Left ventricle myocardium superior (tissue), 1 donor: ENCODE measurements at regions of chr3 and their contacts with region 1.

Region 1: DNA sequence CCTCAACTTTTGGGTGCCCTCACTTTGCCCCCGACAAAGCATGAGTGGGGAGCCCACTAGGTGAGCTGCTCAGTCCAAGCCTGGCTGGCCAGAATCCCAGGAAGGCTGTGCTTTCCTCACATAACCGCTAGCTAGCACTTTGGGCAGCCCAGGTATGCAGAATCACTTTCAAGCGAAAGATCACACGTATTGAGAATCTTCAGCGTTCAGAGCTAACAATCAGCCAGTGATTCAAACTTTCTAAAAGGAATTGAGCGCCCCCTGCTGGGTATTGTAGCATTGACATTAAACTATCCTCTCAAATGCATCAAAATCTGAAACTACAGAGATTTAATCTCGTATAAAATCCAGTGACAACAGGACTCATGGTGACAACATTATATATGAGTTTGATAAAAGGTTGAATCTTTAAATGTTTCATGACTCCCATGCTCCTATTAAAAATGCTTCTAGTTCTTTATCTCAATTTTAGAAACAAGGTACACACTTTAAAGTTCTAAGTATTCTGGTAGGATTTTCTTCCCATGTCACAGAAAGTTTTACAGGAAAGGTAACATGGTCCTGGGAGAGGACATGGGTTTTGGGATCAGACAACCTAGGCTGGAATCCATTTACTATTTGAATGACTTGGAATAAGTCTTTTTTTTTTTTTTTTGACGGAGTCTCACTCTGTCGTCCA is 11.8 kb downstream of the ANAPC13 start:
- DNase-seq: peak; percentile 52
- ATAC-seq: peak; percentile 47

Region 2: DNA sequence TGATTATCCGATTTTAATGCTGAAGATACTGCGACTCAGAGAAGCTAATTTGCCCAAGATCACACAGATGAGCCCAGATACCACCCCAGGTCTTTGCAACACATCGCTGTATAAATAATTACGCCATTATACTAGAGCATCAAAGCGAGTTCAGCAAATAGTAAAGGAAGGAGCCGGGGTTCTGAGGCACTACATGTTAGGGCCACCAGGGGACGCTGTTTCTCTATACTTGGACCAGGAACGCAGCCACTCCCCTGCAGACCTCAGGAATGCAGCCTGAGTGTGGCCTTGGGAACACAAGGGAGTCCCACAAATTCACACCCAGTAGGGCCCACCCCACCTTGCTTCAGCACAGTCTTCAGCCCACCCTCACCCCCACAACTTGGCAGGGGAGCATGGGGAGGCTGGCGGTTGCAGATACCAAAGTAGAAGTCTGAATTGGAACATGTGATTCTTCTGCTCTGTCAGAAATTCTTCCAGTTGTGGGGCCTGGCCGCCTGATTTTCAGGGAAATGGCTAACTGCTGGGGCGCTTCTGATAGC is 165.6 kb before region 1 on chr3:
- intact Hi-C with region 1: loop called (anchors 2 kb)
- DNase-seq: peak; percentile 83
- ATAC-seq: peak; percentile 67

Region 3: GRCh38 chr3:134378384-134378783 is 95.6 kb before region 1 on chr3:
- intact Hi-C with region 1: loop called (anchors 5 kb)
- DNase-seq: peak; percentile 66
- ATAC-seq: peak; percentile 13